ENCODE measurements at regions of chr1 and their contacts with region 1.

Region 1: GRCh38 chr1:16625497-16626408 is 12.4 kb upstream of the NBPF1 start:
- DNase-seq: peak; percentile 65
- CTCF ChIP-seq: no peak

Region 2: GRCh38 chr1:16946646-16947045 is 320.9 kb after region 1 on chr1:
- in situ Hi-C with region 1: loop called (anchors 5 kb)
- DNase-seq: no peak
- CTCF ChIP-seq: no peak

Region 3: DNA sequence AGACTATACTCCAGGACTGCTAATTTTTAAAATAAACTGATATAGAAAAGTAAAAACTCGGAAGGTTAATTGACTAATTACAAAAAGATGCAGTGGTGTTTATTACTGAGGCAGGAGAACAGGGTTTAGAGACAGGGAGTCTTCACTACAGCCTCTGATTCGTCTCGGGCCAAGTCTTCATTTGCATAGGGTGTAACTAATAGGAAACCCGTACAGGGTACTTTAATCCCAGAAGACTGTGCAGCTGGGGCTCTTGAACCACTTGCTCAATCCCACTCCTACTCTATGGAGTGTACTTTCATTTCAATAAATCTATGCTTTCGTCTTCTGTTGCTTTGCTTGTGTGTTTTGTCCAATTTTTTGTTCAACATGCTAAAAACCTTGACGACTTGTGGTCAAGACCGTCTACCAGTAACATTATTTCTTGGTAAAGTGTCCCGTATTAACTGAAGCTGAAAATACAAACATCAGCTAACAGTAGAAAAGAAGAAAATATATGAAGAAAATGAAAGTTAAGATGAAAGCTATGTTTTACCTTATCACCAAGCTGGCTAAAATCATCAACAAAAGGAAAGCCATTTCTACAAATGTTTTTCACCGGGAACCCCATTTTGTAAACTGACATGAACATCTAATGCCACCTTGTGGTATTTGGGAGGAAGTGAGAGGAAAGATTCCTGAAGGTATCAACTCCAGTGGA is 420.0 kb after region 1 on chr1:
- in situ Hi-C with region 1: loop called (anchors 10 kb)
- DNase-seq: peak; percentile 33
- CTCF ChIP-seq: peak; percentile 63